H1 (cell line): ENCODE measurements at regions of chr14 and their contacts with region 1.

Region 1: DNA sequence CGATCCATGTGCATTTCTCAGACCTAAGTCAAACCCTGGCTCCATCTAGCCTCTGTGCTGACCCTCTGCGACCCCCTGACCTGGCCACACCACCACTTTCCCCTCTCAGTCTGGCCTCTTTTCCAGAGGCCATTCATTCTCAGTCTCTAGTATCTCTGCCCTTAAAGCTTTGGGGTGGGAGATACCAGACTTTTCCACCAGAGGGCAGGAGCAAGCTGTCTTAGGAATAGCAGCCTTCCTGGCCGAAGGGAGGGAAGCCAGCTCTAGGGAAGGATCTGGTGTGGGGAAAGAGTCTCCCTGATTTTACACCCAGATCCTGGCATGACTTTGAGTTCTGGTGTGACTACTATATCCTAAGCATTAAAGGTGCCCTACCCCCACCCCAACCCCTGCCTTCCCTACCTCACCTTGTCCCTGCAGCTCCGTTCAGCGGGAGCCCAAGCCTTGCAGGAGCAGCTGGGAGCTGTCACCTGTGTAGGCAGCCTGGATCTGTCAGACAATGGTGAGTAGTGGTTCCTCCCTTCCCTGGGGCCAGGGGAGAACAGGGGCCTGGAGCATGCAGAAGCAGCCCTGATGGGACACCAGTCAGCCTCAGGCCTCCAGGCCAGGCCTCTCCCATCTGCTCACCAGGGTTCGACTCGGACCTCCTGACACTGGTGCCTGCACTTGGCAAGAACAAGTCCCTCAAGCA is 6.6 kb downstream of the CARMIL3 start:
- DNase-seq: peak in 1 of 2 experiments; percentile 84
- H3K4me3 ChIP-seq: no peak overlapping the region
- H3K27ac ChIP-seq: no peak overlapping the region
- H3K4me1 ChIP-seq: 0 out of 7 replicates have a peak, but pooled peaks cover 0 to 2% (median 0%) of the 10 kb centered on the region in 4 experiments
- H3K27me3 ChIP-seq: no peaks in the 10 kb centered on the region
- CTCF ChIP-seq: peak in 2 of 3 experiments; percentile 84 to 93; a peak in 3 of 4 replicates
- EP300 ChIP-seq: no peak
- POLR2A ChIP-seq: no peak
- RAD21 ChIP-seq: peak; percentile 93 to 97

Region 2: DNA sequence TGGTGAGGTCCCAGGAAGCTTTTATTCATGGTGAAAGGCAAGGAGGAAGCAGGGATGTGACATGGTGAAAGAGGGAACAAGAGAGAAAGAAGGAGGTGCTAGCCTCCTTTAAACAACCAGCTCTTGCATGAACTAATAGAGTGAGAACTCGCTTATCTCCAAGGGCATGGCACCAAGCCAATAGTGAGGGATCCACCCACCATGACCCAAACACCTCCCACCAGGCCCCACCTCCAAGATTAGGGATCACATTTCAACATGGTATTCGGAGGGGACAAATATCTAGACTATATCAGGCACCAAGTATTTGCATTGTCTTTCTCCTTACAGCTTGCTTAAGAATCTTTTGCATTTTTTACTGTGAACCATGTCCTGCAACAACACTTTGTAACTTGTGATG is 196.7 kb before region 1 on chr14:
- CTCF ChIA-PET with region 1: no interaction called
- POLR2A ChIA-PET with region 1: no interaction called
- DNase-seq: no peak
- H3K4me3 ChIP-seq: no peak overlapping the region
- H3K27ac ChIP-seq: no peak overlapping the region
- H3K4me1 ChIP-seq: no peaks in the 10 kb centered on the region
- H3K27me3 ChIP-seq: 0 out of 7 replicates have a peak, but pooled peaks cover 0 to 4% (median 0%) of the 10 kb centered on the region in 4 experiments
- CTCF ChIP-seq: no peak
- EP300 ChIP-seq: no peak
- POLR2A ChIP-seq: no peak
- RAD21 ChIP-seq: no peak

Region 3: GRCh38 chr14:23910101-23910875 is 148.1 kb before region 1 on chr14:
- CTCF ChIA-PET with region 1: no interaction called
- POLR2A ChIA-PET with region 1: no interaction called
- DNase-seq: peak; percentile 81 to 92
- H3K4me3 ChIP-seq: no peak overlapping the region
- H3K27ac ChIP-seq: no peak overlapping the region
- H3K4me1 ChIP-seq: peaks cover 0 to 9% (median 4%) of the 10 kb centered on the region in 4 experiments; a peak in 3 of 7 replicates
- H3K27me3 ChIP-seq: no peaks in the 10 kb centered on the region
- CTCF ChIP-seq: peak; percentile 67 to 93 (median 84)
- EP300 ChIP-seq: no peak
- POLR2A ChIP-seq: no peak
- RAD21 ChIP-seq: peak; percentile 93

Region 4: GRCh38 chr14:24036169-24036962 is 22.0 kb before region 1 on chr14:
- CTCF ChIA-PET with region 1: interaction called, 33 read pairs
- POLR2A ChIA-PET with region 1: no interaction called
- DNase-seq: peak in 1 of 2 experiments; percentile 85
- H3K4me3 ChIP-seq: peak overlapping the region; percentile 45 to 73 (median 70)
- H3K27ac ChIP-seq: no peak overlapping the region
- H3K4me1 ChIP-seq: no peaks in the 10 kb centered on the region; a peak in 1 of 7 replicates
- H3K27me3 ChIP-seq: no peaks in the 10 kb centered on the region
- CTCF ChIP-seq: peak; percentile 75 to 82 (median 81)
- EP300 ChIP-seq: no peak
- POLR2A ChIP-seq: no peak
- RAD21 ChIP-seq: peak; percentile 51 to 69

Region 5: DNA sequence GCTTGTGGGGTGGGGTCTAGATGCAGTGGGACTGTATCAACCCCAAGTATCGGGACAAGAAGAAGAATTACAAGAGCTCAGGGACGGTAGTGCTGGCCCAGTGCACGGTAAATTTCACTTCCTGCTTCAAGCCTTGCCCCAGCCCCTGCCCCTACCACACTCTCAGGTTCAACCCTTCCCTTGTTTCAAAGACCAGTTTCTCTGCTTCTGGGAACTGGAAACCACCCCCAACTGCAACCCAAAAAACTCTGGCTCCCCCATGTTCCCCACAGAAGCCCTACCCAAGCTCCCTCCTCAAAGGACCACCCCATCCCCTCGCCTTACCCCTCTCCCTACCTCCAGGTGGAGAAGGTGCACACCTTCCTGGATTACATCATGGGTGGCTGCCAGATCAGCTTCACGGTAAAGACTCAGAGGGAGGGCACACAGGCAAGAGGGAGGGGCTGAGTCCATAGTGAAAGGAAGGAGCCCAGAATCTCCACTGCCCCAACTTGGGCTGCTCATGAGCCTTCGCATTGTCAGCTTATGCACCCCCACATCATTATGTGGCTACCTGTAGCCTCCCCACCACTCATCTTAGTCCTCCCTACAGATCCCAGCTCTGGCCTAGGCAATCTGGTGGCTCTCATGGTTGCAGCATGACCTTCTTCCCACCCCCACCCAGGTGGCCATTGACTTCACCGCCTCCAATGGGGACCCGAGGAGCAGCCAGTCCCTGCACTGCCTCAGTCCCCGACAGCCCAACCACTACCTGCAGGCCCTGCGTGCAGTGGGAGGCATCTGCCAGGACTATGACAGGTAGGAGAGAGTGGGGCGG is 17.3 kb after region 1 on chr14:
- CTCF ChIA-PET with region 1: interaction called, 61 read pairs
- POLR2A ChIA-PET with region 1: interaction called, 36 read pairs
- DNase-seq: no peak
- H3K4me3 ChIP-seq: no peak overlapping the region
- H3K27ac ChIP-seq: no peak overlapping the region
- H3K4me1 ChIP-seq: peaks cover 0 to 11% (median 7%) of the 10 kb centered on the region in 4 experiments; a peak in 6 of 7 replicates
- H3K27me3 ChIP-seq: no peaks in the 10 kb centered on the region
- CTCF ChIP-seq: no peak
- EP300 ChIP-seq: no peak
- POLR2A ChIP-seq: no peak
- RAD21 ChIP-seq: no peak

Region 6: GRCh38 chr14:24086193-24086955 is 28.0 kb after region 1 on chr14:
- CTCF ChIA-PET with region 1: interaction called, 316 read pairs
- POLR2A ChIA-PET with region 1: interaction called, 626 read pairs
- DNase-seq: no peak
- H3K4me3 ChIP-seq: no peak overlapping the region
- H3K27ac ChIP-seq: no peak overlapping the region
- H3K4me1 ChIP-seq: peaks cover 0 to 6% (median 4%) of the 10 kb centered on the region in 4 experiments; a peak in 6 of 7 replicates
- H3K27me3 ChIP-seq: peaks cover 0 to 10% (median 7%) of the 10 kb centered on the region in 4 experiments; a peak in 5 of 7 replicates
- CTCF ChIP-seq: no peak
- EP300 ChIP-seq: no peak
- POLR2A ChIP-seq: no peak
- RAD21 ChIP-seq: no peak

Region 7: DNA sequence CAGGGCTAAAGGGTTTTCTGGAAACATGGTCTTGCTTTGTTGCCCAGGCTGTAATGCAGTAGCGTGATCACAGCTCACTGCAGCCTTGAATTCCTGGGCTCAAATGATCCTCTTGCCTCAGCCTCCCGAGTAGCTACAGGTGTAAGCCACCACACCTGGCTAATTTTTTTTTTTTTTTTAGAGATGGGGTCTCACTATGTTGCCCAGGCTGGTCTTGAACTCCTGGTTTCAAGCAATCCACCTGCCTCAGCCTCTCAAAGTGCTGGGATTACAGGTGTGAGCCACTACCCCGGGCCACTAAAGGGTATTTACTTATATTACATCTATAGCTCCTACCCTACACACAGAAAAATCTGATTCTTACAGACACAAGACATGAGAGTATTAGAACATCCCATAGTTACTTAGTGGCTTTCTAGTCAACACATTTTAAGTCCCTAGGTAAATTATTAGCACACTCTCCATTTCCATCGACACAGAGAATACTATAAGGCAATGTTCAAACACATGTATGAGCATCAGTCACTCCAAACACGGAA is 50.0 kb after region 1 on chr14:
- CTCF ChIA-PET with region 1: interaction called, 142 read pairs
- POLR2A ChIA-PET with region 1: interaction called, 626 read pairs
- DNase-seq: no peak
- H3K4me3 ChIP-seq: no peak overlapping the region
- H3K27ac ChIP-seq: no peak overlapping the region
- H3K4me1 ChIP-seq: no peaks in the 10 kb centered on the region
- H3K27me3 ChIP-seq: no peaks in the 10 kb centered on the region
- CTCF ChIP-seq: no peak
- EP300 ChIP-seq: no peak
- POLR2A ChIP-seq: no peak
- RAD21 ChIP-seq: no peak

Region 8: DNA sequence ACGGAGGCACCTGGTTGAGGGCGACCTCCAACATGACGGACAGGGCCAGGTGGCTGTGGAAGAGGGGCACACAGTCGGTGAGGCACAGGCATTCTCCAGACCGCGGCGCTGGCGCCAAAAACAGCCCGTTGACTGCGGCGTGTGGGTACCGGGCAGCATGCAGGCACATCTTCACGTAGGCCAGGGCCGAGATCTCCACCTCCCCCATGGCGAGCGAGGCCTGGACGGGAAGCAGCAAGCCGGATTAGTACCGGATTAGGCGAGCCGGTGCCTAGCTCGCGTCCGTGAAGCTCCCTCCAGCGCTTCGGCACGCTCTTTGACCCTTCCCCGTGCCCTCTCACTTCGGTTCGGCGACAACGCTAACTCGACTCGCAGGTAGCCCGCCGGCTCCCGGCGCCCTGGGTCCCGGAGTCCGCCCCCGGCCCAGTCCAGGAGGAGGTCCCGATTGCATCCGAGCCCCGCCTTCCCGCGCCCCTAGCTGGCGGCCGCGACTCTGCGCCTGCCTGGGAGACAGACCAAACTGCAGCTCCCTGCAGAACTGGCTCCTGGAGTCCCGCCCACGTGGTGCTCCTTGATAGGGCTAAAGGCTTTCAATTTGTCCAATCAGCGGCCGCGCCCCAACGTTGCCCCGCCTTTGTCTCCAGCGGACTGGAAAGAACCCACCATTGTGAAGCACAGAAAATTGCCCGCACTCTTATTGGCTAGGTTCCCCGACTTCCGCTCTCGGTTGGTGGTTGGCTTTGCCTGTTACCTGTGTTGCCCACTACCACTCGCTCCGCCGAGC is 82.9 kb after region 1 on chr14 and contains the start of gene EMC9:
- CTCF ChIA-PET with region 1: interaction called, 18 read pairs
- POLR2A ChIA-PET with region 1: interaction called, 5 read pairs
- DNase-seq: peak; percentile 98 to 100
- H3K4me3 ChIP-seq: peak within 1 kb of the TSS; percentile 79 to 99 (median 94)
- H3K27ac ChIP-seq: peak within 1 kb of the TSS; percentile 92
- H3K4me1 ChIP-seq: peaks cover 4 to 13% (median 7%) of the 10 kb centered on the region in 4 experiments; a peak in 6 of 7 replicates
- H3K27me3 ChIP-seq: no peaks in the 10 kb centered on the region
- CTCF ChIP-seq: peak; percentile 23 to 48 (median 26); a peak in 3 of 4 replicates
- EP300 ChIP-seq: no peak
- POLR2A ChIP-seq: peak; percentile 81 to 84
- RAD21 ChIP-seq: no peak
- total RNA-seq, gene EMC9: 36.9 and 38.4 TPM in 2 replicates